ENCODE measurements at regions of chr1 and their contacts with region 1.

Region 1: GRCh38 chr1:109397538-109398342 is at the start of gene SORT1:
- DNase-seq: peak; percentile 91
- H3K4me3 ChIP-seq: peak within 1 kb of the TSS; percentile 15 to 51 (median 44)
- H3K27ac ChIP-seq: no peak within 1 kb of the TSS
- H3K4me1 ChIP-seq: peaks cover 15% of the 10 kb centered on the region
- H3K27me3 ChIP-seq: peaks cover 13 to 19% of the 10 kb centered on the region in 2 experiments
- CTCF ChIP-seq: no peak
- POLR2A ChIP-seq: no peak
- total RNA-seq, gene SORT1: 16.8 and 17.8 TPM in 2 replicates

Region 2: DNA sequence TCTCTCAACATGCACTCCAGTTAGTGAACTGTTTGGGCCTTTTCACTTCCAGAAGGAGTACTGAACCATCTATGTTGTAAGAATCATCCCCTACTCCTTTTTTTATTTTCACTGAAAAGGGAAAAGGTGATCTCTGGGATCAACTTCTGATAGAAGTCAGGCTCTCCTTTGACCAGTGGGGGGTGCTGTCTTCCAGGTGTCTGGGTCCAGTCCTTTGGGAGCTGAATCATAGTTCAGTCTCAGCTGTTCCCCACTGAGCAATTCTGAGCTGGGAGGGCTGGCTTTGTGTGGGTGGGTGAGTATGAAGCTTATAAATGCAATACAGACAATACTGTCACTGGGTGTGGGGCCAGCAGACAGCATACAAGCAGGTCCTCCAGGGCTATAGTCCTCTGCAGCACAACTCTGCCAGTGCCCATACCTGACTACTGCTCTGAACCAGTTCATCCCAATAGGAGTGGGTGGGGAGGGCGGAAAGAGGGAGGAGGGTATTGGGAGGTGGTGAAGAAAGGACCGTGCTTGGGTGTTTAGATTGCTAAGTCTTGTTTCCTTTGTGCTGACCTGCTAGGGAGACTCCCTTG is 196.5 kb before region 1 on chr1:
- CTCF ChIA-PET with region 1: interaction called, 18 read pairs
- POLR2A ChIA-PET with region 1: no interaction called
- dilution Hi-C with region 1: no loop called
- intact Hi-C with region 1: loop called (anchors 2 kb)
- DNase-seq: peak; percentile 37
- H3K4me3 ChIP-seq: no peak overlapping the region
- H3K27ac ChIP-seq: no peak overlapping the region
- H3K4me1 ChIP-seq: peaks cover 17% of the 10 kb centered on the region
- H3K27me3 ChIP-seq: no peaks in the 10 kb centered on the region
- CTCF ChIP-seq: peak; percentile 57 to 68
- POLR2A ChIP-seq: no peak

Region 3: DNA sequence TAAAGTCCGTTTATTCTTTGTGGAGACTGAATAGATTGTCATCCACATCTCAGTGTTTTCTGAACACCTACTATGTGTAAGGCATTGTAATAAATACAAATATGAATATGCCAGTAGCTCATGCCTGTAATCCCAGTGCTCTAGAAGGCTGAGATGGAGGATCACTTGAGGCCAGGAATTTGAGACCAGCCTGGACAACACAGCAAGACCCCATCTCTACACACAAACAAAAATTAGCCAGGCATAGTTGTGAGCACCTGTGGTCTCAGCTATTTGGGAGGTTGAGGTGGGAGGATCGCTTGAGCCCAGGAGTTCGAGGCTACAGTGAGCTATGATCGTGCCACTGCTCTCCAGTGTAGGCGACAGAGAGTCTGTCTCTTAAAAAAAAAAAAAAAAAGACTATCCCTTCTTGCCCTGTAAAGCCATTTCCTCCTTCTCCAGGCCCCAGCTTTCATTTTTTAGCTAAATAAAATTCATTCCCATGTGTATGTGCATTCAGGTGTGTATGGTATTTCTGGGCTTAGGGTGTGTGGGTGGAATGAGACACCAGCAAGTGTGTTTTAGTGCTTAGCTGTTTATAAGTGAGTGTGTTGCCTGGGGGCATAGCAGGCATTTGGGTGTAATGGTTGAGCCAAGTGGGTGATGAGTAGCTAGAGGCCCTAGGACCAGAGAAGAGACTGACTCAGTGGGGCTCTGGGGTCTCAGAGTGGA is 140.6 kb before region 1 on chr1:
- CTCF ChIA-PET with region 1: interaction called, 11 read pairs
- POLR2A ChIA-PET with region 1: no interaction called
- dilution Hi-C with region 1: no loop called
- intact Hi-C with region 1: no loop called
- DNase-seq: no peak
- H3K4me3 ChIP-seq: no peak overlapping the region
- H3K27ac ChIP-seq: no peak overlapping the region
- H3K4me1 ChIP-seq: no peaks in the 10 kb centered on the region
- H3K27me3 ChIP-seq: peaks cover 0 to 2% of the 10 kb centered on the region in 2 experiments
- CTCF ChIP-seq: no peak
- POLR2A ChIP-seq: no peak

Region 4: GRCh38 chr1:109277434-109278204 is 120.1 kb before region 1 on chr1:
- CTCF ChIA-PET with region 1: interaction called, 282 read pairs
- POLR2A ChIA-PET with region 1: interaction called, 3 read pairs
- dilution Hi-C with region 1: no loop called
- intact Hi-C with region 1: loop called (anchors 1 kb)
- DNase-seq: peak; percentile 69
- H3K4me3 ChIP-seq: no peak overlapping the region
- H3K27ac ChIP-seq: no peak overlapping the region
- H3K4me1 ChIP-seq: peaks cover 12% of the 10 kb centered on the region
- H3K27me3 ChIP-seq: no peaks in the 10 kb centered on the region
- CTCF ChIP-seq: peak; percentile 78 to 95
- POLR2A ChIP-seq: no peak

Region 5: GRCh38 chr1:109426278-109427170 is 28.8 kb after region 1 on chr1 and contains the start of gene PSMA5:
- CTCF ChIA-PET with region 1: interaction called, 5 read pairs
- POLR2A ChIA-PET with region 1: no interaction called
- dilution Hi-C with region 1: no loop called
- intact Hi-C with region 1: loop called (anchors 1 kb)
- DNase-seq: peak; percentile 99
- H3K4me3 ChIP-seq: peak within 1 kb of the TSS; percentile 63 to 89 (median 86)
- H3K27ac ChIP-seq: peak within 1 kb of the TSS; percentile 68
- H3K4me1 ChIP-seq: peaks cover 15% of the 10 kb centered on the region
- H3K27me3 ChIP-seq: no peaks in the 10 kb centered on the region
- CTCF ChIP-seq: no peak
- POLR2A ChIP-seq: peak; percentile 88
- total RNA-seq, gene PSMA5: 112 and 125 TPM in 2 replicates